Right ventricle myocardium inferior (tissue), 1 donor: ENCODE measurements at regions of chr9 and their contacts with region 1.

Region 1: GRCh38 chr9:14400658-14400995 is 86.7 kb upstream of the NFIB start:
- DNase-seq: no peak
- ATAC-seq: peak; percentile 88

Region 2: GRCh38 chr9:13351778-13352386 is 1048.7 kb before region 1 on chr9:
- intact Hi-C with region 1: loop called (anchors 10 kb)
- DNase-seq: no peak
- ATAC-seq: no peak